Activated B cell treated with CpG ODN at 0.5 μM for 24 hours (primary cell): ENCODE measurements at regions of chr22 and their contacts with region 1.

Region 1: GRCh38 chr22:38793721-38794466 is at the start of gene DNAL4:
- DNase-seq: peak; percentile 78
- ATAC-seq: peak; percentile 99
- H3K4me3 Mint-ChIP-seq: peak within 1 kb of the TSS; percentile 87
- H3K27ac Mint-ChIP-seq: peak within 1 kb of the TSS; percentile 87
- H3K4me1 Mint-ChIP-seq: peaks cover 14% of the 10 kb centered on the region
- H3K27me3 Mint-ChIP-seq: peaks cover 17% of the 10 kb centered on the region
- CTCF ChIP-seq: no peak
- total RNA-seq, gene DNAL4: 7.7 and 8.4 TPM in 2 replicates

Region 2: DNA sequence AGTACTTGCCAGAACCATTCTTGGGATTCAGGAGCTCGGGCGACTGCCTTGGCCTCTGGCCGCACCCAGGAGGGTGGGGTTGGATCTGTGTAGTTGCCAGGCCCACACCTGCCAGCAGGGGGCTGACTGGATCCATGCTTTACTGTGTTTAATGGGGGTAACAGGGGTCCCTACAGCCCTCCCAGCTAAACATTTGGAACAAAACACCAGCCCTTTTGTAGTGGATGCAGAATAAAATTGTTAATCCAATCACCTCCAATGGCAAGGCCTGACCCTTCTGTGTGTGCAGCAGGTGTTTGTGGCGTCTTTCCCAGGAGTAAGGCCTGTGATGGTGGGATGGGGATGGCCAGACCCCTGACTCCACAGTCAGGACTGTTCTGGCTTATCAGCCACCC is 60.6 kb before region 1 on chr22:
- CTCF ChIA-PET with region 1: no interaction called
- POLR2A ChIA-PET with region 1: no interaction called
- intact Hi-C with region 1: no loop called
- DNase-seq: no peak
- ATAC-seq: peak; percentile 76
- H3K4me3 Mint-ChIP-seq: no peak overlapping the region
- H3K27ac Mint-ChIP-seq: peak overlapping the region; percentile 75
- H3K4me1 Mint-ChIP-seq: peaks cover 26% of the 10 kb centered on the region
- H3K27me3 Mint-ChIP-seq: no peaks in the 10 kb centered on the region
- CTCF ChIP-seq: peak; percentile 58

Region 3: GRCh38 chr22:38843201-38843715 is 49.4 kb after region 1 on chr22:
- CTCF ChIA-PET with region 1: no interaction called
- POLR2A ChIA-PET with region 1: no interaction called
- intact Hi-C with region 1: loop called (anchors 5 kb)
- DNase-seq: peak; percentile 51
- ATAC-seq: peak; percentile 75
- H3K4me3 Mint-ChIP-seq: no peak overlapping the region
- H3K27ac Mint-ChIP-seq: no peak overlapping the region
- H3K4me1 Mint-ChIP-seq: peaks cover 13% of the 10 kb centered on the region
- H3K27me3 Mint-ChIP-seq: peaks cover 56% of the 10 kb centered on the region
- CTCF ChIP-seq: no peak

Region 4: GRCh38 chr22:39152511-39153219 is 358.8 kb after region 1 on chr22 and contains the start of gene CBX7:
- CTCF ChIA-PET with region 1: no interaction called
- POLR2A ChIA-PET with region 1: no interaction called
- intact Hi-C with region 1: loop called (anchors 10 kb)
- DNase-seq: peak; percentile 94
- ATAC-seq: peak; percentile 84
- H3K4me3 Mint-ChIP-seq: peak within 1 kb of the TSS; percentile 84
- H3K27ac Mint-ChIP-seq: peak within 1 kb of the TSS; percentile 76
- H3K4me1 Mint-ChIP-seq: peaks cover 46% of the 10 kb centered on the region
- H3K27me3 Mint-ChIP-seq: peaks cover 16% of the 10 kb centered on the region
- CTCF ChIP-seq: no peak
- total RNA-seq, gene CBX7: 42.6 and 45.4 TPM in 2 replicates